GM12878 (cell line): ENCODE measurements at regions of chr1 and their contacts with region 1.

Region 1: GRCh38 chr1:183915625-183916510 is 110.9 kb downstream of the RGL1 start:
- DNase-seq: peak; percentile 68
- ATAC-seq: peak; percentile 60
- H3K4me3 ChIP-seq: no peak overlapping the region
- H3K27ac ChIP-seq: peak overlapping the region; percentile 62
- H3K4me1 ChIP-seq: peaks cover 33% of the 10 kb centered on the region
- H3K27me3 ChIP-seq: no peaks in the 10 kb centered on the region
- CTCF ChIP-seq: peak; percentile 66 to 91 (median 69)
- EP300 ChIP-seq: no peak
- POLR2A ChIP-seq: no peak
- RAD21 ChIP-seq: peak; percentile 98

Region 2: GRCh38 chr1:183471743-183472487 is 444.0 kb before region 1 on chr1:
- CTCF ChIA-PET with region 1: interaction called, 3 read pairs
- POLR2A ChIA-PET with region 1: no interaction called
- RAD21 ChIA-PET with region 1: no interaction called
- SMC1A ChIA-PET with region 1: interaction called, 3 read pairs
- in situ Hi-C with region 1: no loop called
- intact Hi-C with region 1: loop called (anchors 5 kb)
- DNase-seq: peak; percentile 90
- ATAC-seq: peak; percentile 69
- H3K4me3 ChIP-seq: peak overlapping the region; percentile 87
- H3K27ac ChIP-seq: peak overlapping the region; percentile 99
- H3K4me1 ChIP-seq: peaks cover 8% of the 10 kb centered on the region
- H3K27me3 ChIP-seq: no peaks in the 10 kb centered on the region
- CTCF ChIP-seq: peak in 2 of 3 experiments; percentile 21 to 38; a peak in 3 of 6 replicates
- EP300 ChIP-seq: no peak
- POLR2A ChIP-seq: peak; percentile 56
- RAD21 ChIP-seq: no peak

Region 3: GRCh38 chr1:183635606-183636333 is 280.1 kb before region 1 on chr1 and contains the start of gene ARPC5:
- CTCF ChIA-PET with region 1: interaction called, 59 read pairs
- POLR2A ChIA-PET with region 1: interaction called, 9 read pairs
- RAD21 ChIA-PET with region 1: interaction called, 23 read pairs
- SMC1A ChIA-PET with region 1: interaction called, 43 read pairs
- in situ Hi-C with region 1: no loop called
- intact Hi-C with region 1: loop called (anchors 5 kb)
- DNase-seq: peak; percentile 95
- ATAC-seq: peak; percentile 86
- H3K4me3 ChIP-seq: peak within 1 kb of the TSS; percentile 93
- H3K27ac ChIP-seq: peak within 1 kb of the TSS; percentile 96
- H3K4me1 ChIP-seq: 0 out of 2 replicates have a peak, but pooled peaks cover 3% of the 10 kb centered on the region
- H3K27me3 ChIP-seq: no peaks in the 10 kb centered on the region
- CTCF ChIP-seq: no peak
- EP300 ChIP-seq: no peak
- POLR2A ChIP-seq: peak; percentile 93
- RAD21 ChIP-seq: no peak
- polyA plus RNA-seq, gene ARPC5: 246 to 274 TPM

Region 4: GRCh38 chr1:183676586-183677189 is 239.2 kb before region 1 on chr1:
- CTCF ChIA-PET with region 1: interaction called, 129 read pairs
- POLR2A ChIA-PET with region 1: no interaction called
- RAD21 ChIA-PET with region 1: interaction called, 5 read pairs
- SMC1A ChIA-PET with region 1: interaction called, 5 read pairs
- in situ Hi-C with region 1: no loop called
- intact Hi-C with region 1: loop called (anchors 10 kb)
- DNase-seq: no peak
- ATAC-seq: peak; percentile 31; the same call in 2 of the 3 replicates
- H3K4me3 ChIP-seq: no peak overlapping the region
- H3K27ac ChIP-seq: no peak overlapping the region
- H3K4me1 ChIP-seq: no peaks in the 10 kb centered on the region
- H3K27me3 ChIP-seq: no peaks in the 10 kb centered on the region
- CTCF ChIP-seq: no peak
- EP300 ChIP-seq: no peak
- POLR2A ChIP-seq: no peak
- RAD21 ChIP-seq: no peak

Region 5: GRCh38 chr1:183804881-183805841 is 110.7 kb before region 1 on chr1 and contains the start of gene RGL1:
- CTCF ChIA-PET with region 1: interaction called, 19 read pairs
- POLR2A ChIA-PET with region 1: interaction called, 5 read pairs
- RAD21 ChIA-PET with region 1: interaction called, 25 read pairs
- SMC1A ChIA-PET with region 1: interaction called, 42 read pairs
- in situ Hi-C with region 1: no loop called
- intact Hi-C with region 1: loop called (anchors 2 kb)
- DNase-seq: no peak
- ATAC-seq: peak; percentile 72
- H3K4me3 ChIP-seq: peak within 1 kb of the TSS; percentile 90
- H3K27ac ChIP-seq: peak within 1 kb of the TSS; percentile 93
- H3K4me1 ChIP-seq: peaks cover 11% of the 10 kb centered on the region; the same call in 1 of the 2 replicates
- H3K27me3 ChIP-seq: no peaks in the 10 kb centered on the region
- CTCF ChIP-seq: no peak
- EP300 ChIP-seq: 0 out of 4 replicates have a peak, but pooled peaks of 1 of the 2 experiments have one; percentile 14
- POLR2A ChIP-seq: peak; percentile 81
- RAD21 ChIP-seq: no peak
- polyA plus RNA-seq, gene RGL1: 8.1 to 9.4 TPM

Region 6: DNA sequence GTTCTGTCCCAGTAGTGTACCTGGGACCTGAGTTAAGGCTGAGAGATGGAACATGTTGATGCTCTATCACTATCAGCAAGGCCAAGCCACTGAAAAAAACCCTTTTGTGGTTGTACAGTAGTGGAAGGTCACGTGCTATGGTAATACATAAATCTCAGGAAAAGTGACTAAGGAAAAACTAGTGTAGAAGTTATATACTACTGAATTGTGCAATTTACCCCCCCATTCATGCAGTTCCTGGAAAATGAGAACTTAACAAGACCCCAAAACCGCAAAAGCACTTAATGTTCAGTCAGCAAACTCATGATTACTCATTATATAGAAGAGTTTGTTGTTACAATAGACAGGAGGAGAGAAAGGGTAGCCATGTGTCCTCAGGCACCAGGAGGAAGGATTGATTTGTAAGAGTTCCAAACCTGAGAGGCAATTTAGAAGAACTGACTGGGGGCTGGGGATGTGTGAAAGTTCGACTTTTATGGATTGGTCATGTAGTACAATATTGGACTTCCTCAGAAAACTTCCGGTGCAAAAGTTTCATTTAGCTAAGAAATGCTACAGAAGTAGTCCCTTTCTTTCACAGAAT is 19.3 kb before region 1 on chr1:
- CTCF ChIA-PET with region 1: interaction called, 64 read pairs
- POLR2A ChIA-PET with region 1: interaction called, 16 read pairs
- RAD21 ChIA-PET with region 1: interaction called, 61 read pairs
- SMC1A ChIA-PET with region 1: interaction called, 134 read pairs
- in situ Hi-C with region 1: no loop called
- intact Hi-C with region 1: loop called (anchors 1 kb)
- DNase-seq: no peak
- ATAC-seq: peak; percentile 27
- H3K4me3 ChIP-seq: no peak overlapping the region; the same call in 1 of the 2 replicates
- H3K27ac ChIP-seq: peak overlapping the region; percentile 97
- H3K4me1 ChIP-seq: peaks cover 80% of the 10 kb centered on the region
- H3K27me3 ChIP-seq: no peaks in the 10 kb centered on the region
- CTCF ChIP-seq: no peak
- EP300 ChIP-seq: no peak
- POLR2A ChIP-seq: no peak
- RAD21 ChIP-seq: no peak

Region 7: DNA sequence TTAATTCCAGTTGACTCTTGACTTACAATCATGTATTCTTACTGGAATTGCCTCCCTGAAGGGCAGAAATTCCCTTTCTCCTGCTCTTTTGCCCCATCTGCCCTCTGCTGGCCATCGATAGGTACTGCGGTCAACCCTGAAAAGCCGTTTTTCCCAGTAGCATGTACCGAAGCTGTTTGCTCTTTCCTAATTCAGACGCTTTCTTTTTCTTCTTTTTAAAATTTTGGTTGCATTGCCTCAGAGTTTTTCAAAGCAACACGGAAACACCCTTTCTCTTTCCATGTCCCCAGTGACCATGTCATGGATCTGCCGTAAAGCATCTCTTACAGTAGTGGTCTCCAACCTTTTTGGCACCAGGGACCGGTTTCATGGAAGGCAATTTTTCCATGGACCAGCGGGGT is 306.8 kb after region 1 on chr1:
- CTCF ChIA-PET with region 1: interaction called, 5 read pairs
- POLR2A ChIA-PET with region 1: no interaction called
- RAD21 ChIA-PET with region 1: interaction called, 3 read pairs
- SMC1A ChIA-PET with region 1: interaction called, 7 read pairs
- in situ Hi-C with region 1: no loop called
- intact Hi-C with region 1: loop called (anchors 5 kb)
- DNase-seq: peak; percentile 11
- ATAC-seq: peak; percentile 59
- H3K4me3 ChIP-seq: no peak overlapping the region
- H3K27ac ChIP-seq: no peak overlapping the region
- H3K4me1 ChIP-seq: no peaks in the 10 kb centered on the region
- H3K27me3 ChIP-seq: peaks cover 0 to 5% of the 10 kb centered on the region in 2 experiments; a peak in 1 of 4 replicates
- CTCF ChIP-seq: peak; percentile 86 to 96 (median 93)
- EP300 ChIP-seq: no peak
- POLR2A ChIP-seq: no peak
- RAD21 ChIP-seq: peak; percentile 90